Activated CD4-positive, alpha-beta T cell treated with anti-CD3 and anti-CD28 coated beads for 36 hours (primary cell): ENCODE measurements at regions of chr3 and their contacts with region 1.

Region 1: GRCh38 chr3:96370637-96371036 is 443.8 kb upstream of the EPHA6 start:
- DNase-seq: no peak
- ATAC-seq: no peak
- H3K4me3 Mint-ChIP-seq: no peak overlapping the region
- H3K27ac Mint-ChIP-seq: no peak overlapping the region
- H3K4me1 Mint-ChIP-seq: no peaks in the 10 kb centered on the region
- H3K27me3 Mint-ChIP-seq: no peaks in the 10 kb centered on the region

Region 2: GRCh38 chr3:96000966-96001365 is 369.7 kb before region 1 on chr3:
- CTCF ChIA-PET with region 1: no interaction called
- POLR2A ChIA-PET with region 1: no interaction called
- intact Hi-C with region 1: no loop called
- DNase-seq: no peak
- ATAC-seq: no peak
- H3K4me3 Mint-ChIP-seq: no peak overlapping the region
- H3K27ac Mint-ChIP-seq: no peak overlapping the region
- H3K4me1 Mint-ChIP-seq: no peaks in the 10 kb centered on the region
- H3K27me3 Mint-ChIP-seq: no peaks in the 10 kb centered on the region

Region 3: GRCh38 chr3:96410006-96410730 is 39.5 kb after region 1 on chr3:
- CTCF ChIA-PET with region 1: no interaction called
- POLR2A ChIA-PET with region 1: no interaction called
- intact Hi-C with region 1: no loop called
- DNase-seq: no peak
- ATAC-seq: no peak
- H3K4me3 Mint-ChIP-seq: no peak overlapping the region
- H3K27ac Mint-ChIP-seq: no peak overlapping the region
- H3K4me1 Mint-ChIP-seq: no peaks in the 10 kb centered on the region
- H3K27me3 Mint-ChIP-seq: no peaks in the 10 kb centered on the region

Region 4: DNA sequence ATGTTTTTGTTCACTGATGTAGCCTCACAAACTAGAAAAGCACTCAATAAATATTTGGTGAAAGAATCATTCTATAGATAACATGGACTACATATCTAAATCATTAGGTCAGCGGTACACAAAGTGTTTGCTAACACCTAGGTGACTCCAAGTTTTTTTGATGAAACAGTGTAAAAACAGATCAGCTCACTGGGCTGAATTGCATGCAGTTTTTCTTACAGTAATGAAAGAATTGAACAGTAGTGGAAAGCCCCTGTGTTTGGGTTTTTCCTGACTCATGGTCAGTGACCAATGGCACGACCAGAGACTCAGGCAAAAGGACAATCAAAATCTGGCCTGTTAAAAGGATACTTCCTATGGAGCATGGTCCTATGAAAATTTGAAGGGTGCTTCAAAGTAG is 59.4 kb after region 1 on chr3:
- CTCF ChIA-PET with region 1: no interaction called
- POLR2A ChIA-PET with region 1: no interaction called
- intact Hi-C with region 1: loop called in 1 of 2 experiments (anchors 10 kb)
- DNase-seq: no peak
- ATAC-seq: no peak
- H3K4me3 Mint-ChIP-seq: no peak overlapping the region
- H3K27ac Mint-ChIP-seq: no peak overlapping the region
- H3K4me1 Mint-ChIP-seq: no peaks in the 10 kb centered on the region
- H3K27me3 Mint-ChIP-seq: no peaks in the 10 kb centered on the region

Region 5: GRCh38 chr3:96478496-96478895 is 107.9 kb after region 1 on chr3:
- CTCF ChIA-PET with region 1: no interaction called
- POLR2A ChIA-PET with region 1: no interaction called
- intact Hi-C with region 1: no loop called
- DNase-seq: no peak
- ATAC-seq: no peak
- H3K4me3 Mint-ChIP-seq: no peak overlapping the region
- H3K27ac Mint-ChIP-seq: no peak overlapping the region
- H3K4me1 Mint-ChIP-seq: no peaks in the 10 kb centered on the region
- H3K27me3 Mint-ChIP-seq: no peaks in the 10 kb centered on the region